Heart right ventricle (tissue), 16 donors: ENCODE measurements at regions of chr2 and their contacts with region 1.

Region 1: GRCh38 chr2:201890457-201890856 is 84.1 kb downstream of the CDK15 start:
- DNase-seq: no peak
- ATAC-seq: no peak
- H3K4me3 ChIP-seq: no peak overlapping the region
- H3K27ac ChIP-seq: no peak overlapping the region
- H3K4me1 ChIP-seq: peaks cover 0 to 13% (median 0%) of the 10 kb centered on the region in 9 donors
- H3K27me3 ChIP-seq: peaks cover 0 to 43% (median 5%) of the 10 kb centered on the region in 7 donors
- CTCF ChIP-seq: no peak

Region 2: GRCh38 chr2:201572846-201573508 is 317.5 kb before region 1 on chr2:
- intact Hi-C with region 1: no loop called
- DNase-seq: no peak
- ATAC-seq: no peak
- H3K4me3 ChIP-seq: no peak overlapping the region
- H3K27ac ChIP-seq: no peak overlapping the region
- H3K4me1 ChIP-seq: peaks cover 0 to 5% (median 0%) of the 10 kb centered on the region in 9 donors
- H3K27me3 ChIP-seq: no peaks in the 10 kb centered on the region
- CTCF ChIP-seq: no peak

Region 3: DNA sequence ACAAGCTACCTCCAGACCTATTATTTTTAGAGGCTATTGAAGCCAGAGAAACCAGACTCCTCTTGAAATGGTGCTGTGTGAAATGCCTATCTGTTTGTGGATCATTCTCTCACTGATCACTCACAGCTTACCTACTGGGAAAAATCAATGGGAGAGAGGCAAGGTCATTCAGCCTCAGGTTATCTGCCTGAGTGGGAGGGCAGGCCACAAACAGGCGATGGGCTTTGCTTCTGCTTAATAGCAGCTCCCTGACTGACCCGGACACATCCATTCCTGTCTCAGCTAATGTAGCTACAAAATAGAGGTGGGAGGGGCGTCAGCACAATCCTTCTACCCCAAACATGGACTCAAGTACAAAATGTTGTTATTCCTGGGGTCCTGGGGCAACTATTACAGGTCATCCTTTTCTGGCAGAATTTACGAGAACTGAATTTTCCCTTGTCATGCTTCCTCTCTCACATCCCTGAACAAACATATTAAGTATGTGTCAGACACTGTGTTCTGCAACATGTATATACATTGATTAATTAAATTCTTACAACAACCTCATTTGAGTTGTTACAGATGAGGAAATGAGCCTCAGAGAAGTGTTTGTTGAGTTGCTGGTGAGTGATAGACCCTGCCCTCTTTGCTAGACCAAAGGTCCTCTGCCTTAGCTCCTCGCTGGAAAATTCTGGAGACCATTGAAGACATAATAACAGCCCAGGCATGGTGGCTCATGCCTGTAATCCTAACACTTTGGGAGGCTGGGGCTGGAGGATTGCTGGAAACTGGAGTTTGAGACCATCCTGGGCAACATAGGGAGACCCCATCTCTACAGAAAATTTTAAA is 23.6 kb before region 1 on chr2:
- intact Hi-C with region 1: loop called in 1 of 10 experiments (anchors 1 kb)
- DNase-seq: no peak
- ATAC-seq: no peak
- H3K4me3 ChIP-seq: no peak overlapping the region
- H3K27ac ChIP-seq: no peak overlapping the region
- H3K4me1 ChIP-seq: no peaks in the 10 kb centered on the region
- H3K27me3 ChIP-seq: peaks cover 0 to 20% (median 5%) of the 10 kb centered on the region in 7 donors
- CTCF ChIP-seq: no peak

Region 4: DNA sequence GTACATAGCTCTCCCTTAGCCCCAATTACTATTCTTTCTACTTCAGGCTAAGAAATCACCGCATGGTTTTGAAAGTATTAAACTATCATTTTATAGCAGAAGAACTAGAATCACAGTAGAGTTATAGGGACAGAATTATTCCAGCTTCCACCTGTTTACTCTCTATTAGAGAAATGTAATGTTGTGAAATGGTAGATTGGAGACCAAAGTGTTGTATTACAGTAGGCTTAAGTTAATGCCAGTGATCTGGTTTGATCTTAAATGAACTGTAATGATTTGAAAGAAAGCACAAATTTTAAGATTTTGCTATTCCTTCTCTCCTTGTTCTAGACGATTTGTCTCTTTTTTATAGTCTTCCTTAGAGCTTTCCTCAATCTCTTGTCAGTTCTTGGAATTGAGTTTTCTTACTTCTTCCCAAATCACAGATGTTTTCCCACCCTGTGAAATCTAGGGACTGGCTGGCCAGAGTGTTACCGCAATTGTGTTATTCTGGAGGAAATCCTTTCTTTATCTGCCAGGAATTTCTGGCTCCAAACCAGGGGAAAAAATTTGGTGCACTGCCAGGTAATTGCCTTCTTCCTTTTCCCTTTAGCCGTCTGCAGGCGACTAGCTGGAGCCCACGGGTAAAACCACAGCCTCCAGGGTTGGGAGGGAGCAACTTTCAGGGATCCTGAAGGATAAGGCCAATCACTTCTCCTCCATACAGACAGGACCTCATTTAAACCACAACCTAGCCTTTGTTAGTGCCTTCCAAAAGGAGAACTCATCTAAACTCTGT is 426.8 kb after region 1 on chr2:
- intact Hi-C with region 1: no loop called
- DNase-seq: peak; percentile 31 to 87
- ATAC-seq: peak; percentile 83 to 94 (median 90)
- H3K4me3 ChIP-seq: no peak overlapping the region
- H3K27ac ChIP-seq: peak overlapping the region in 8 of 10 donors; percentile 25 to 89 (median 40)
- H3K4me1 ChIP-seq: peaks cover 0 to 36% (median 19%) of the 10 kb centered on the region in 9 donors
- H3K27me3 ChIP-seq: no peaks in the 10 kb centered on the region
- CTCF ChIP-seq: no peak